B cell (primary cell): ENCODE measurements at regions of chr1 and their contacts with region 1.

Region 1: DNA sequence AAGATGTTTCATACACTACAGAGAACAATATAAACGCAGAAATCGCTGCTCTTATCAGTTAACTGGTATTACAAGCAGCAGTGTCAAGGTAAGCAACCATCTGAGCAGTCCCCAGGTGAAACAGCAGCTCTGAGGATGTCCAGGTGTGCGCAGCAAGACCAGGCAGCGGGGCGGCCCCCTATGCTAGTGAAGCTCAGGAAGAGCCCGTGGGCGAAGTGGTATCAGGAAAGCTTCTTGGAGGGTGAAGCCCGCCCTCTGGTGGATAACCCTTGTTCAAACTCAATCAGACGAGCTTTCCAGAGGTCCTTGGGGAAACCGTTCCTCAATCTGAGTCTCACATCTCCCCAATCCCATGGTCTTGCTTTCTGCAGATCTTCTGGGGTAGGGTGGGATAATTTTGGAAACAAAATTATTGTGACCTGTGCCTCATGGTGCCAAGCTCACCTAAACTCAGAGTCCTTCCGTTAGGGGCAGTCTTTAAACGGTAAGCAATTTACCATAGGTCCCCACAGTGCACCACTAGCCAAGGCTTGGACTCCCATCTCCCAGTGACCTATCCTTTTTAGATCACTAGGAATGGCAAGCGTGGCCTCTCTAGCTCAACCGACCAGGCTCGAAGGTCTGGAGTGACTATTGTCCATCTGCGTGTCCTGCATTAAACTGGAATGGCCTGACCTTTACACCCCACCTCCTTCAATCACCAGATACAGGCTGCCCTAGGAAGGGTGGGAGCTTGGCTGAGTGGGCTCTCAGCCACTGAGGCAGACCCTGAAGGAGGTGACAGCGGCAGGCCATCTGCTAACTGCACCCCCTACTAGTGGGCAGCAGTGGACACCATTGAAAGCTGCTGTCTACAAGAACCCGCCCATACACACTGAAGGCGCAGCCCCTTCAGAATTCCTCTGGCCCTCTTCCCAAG is 13.6 kb upstream of the FAM110D start:
- DNase-seq: peak; percentile 79
- ATAC-seq: peak; percentile 65
- H3K4me3 ChIP-seq: no peak overlapping the region
- H3K4me3 Mint-ChIP-seq: no peak overlapping the region
- H3K27ac ChIP-seq: no peak overlapping the region
- H3K27ac Mint-ChIP-seq: no peak overlapping the region
- H3K4me1 ChIP-seq: peaks cover 4 to 6% of the 10 kb centered on the region in 2 donors
- H3K4me1 Mint-ChIP-seq: peaks cover 3% of the 10 kb centered on the region
- H3K27me3 ChIP-seq: peaks cover 0 to 6% (median 0%) of the 10 kb centered on the region in 4 experiments
- H3K27me3 Mint-ChIP-seq: peaks cover 14% of the 10 kb centered on the region
- CTCF ChIP-seq: peak; percentile 90

Region 2: DNA sequence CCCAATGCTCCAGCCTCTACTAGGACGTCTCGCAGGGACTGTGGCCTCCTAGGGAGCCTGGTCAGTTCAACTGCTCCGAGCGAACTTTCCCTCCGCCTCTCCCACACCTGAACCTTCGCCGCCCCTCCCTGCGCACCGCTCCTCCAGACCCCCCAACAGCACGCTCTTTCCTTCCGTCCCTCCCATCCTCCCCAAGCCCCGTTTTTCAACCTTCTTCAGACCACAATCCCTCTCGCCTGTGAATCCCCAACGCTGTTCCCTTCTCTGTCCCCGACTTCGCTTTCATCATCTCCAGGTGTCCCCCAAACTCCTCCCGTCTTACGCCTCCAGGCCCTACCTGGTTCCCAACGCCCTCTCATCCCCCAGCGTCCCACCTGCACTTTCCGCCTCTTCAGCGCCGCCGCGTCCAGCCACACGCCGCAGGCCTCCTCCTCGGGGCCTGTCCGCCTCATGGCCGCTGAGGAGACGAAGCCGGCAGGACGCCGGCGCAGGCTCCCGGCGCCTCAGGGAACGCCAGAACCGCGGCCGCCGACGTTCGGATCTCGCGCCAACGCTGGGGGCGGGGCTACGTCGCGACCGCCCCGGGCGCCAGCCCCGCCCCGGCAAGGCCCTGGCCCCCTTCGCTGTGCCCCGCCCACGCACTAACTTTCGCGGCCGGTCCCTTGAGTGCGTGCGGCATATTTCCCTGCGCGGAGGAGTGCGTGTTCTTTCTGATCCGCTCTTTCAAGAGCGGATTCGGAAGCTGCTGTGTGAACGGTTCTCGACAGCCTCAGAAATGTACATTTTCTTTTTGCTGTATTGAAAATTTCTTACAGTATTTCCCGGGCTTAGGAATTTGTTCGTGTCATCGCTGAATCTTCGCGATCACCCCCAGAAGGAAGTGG is 286.2 kb before region 1 on chr1 and contains the start of gene AUNIP:
- CTCF ChIA-PET with region 1: no interaction called
- POLR2A ChIA-PET with region 1: no interaction called
- intact Hi-C with region 1: no loop called
- DNase-seq: peak; percentile 93
- ATAC-seq: peak; percentile 99
- H3K4me3 ChIP-seq: peak within 1 kb of the TSS; percentile 65 to 91 (median 77)
- H3K4me3 Mint-ChIP-seq: peak within 1 kb of the TSS; percentile 96
- H3K27ac ChIP-seq: peak within 1 kb of the TSS; percentile 76 to 86
- H3K27ac Mint-ChIP-seq: peak within 1 kb of the TSS; percentile 95
- H3K4me1 ChIP-seq: peaks cover 22 to 30% of the 10 kb centered on the region in 2 donors
- H3K4me1 Mint-ChIP-seq: peaks cover 26% of the 10 kb centered on the region
- H3K27me3 ChIP-seq: no peaks in the 10 kb centered on the region
- H3K27me3 Mint-ChIP-seq: no peaks in the 10 kb centered on the region
- CTCF ChIP-seq: no peak
- total RNA-seq, gene AUNIP: 0.27 TPM in 1 of 2 replicates, not detected in the other

Region 3: GRCh38 chr1:26126321-26127084 is 18.8 kb before region 1 on chr1:
- CTCF ChIA-PET with region 1: interaction called, 21 read pairs
- POLR2A ChIA-PET with region 1: no interaction called
- intact Hi-C with region 1: no loop called
- DNase-seq: peak; percentile 50
- ATAC-seq: peak; percentile 84
- H3K4me3 ChIP-seq: no peak overlapping the region
- H3K4me3 Mint-ChIP-seq: peak overlapping the region; percentile 44
- H3K27ac ChIP-seq: peak overlapping the region in 1 of 2 donors; percentile 34
- H3K27ac Mint-ChIP-seq: peak overlapping the region; percentile 13
- H3K4me1 ChIP-seq: peaks cover 18 to 21% of the 10 kb centered on the region in 2 donors
- H3K4me1 Mint-ChIP-seq: peaks cover 21% of the 10 kb centered on the region
- H3K27me3 ChIP-seq: peaks cover 0 to 11% (median 3%) of the 10 kb centered on the region in 4 experiments
- H3K27me3 Mint-ChIP-seq: peaks cover 7% of the 10 kb centered on the region
- CTCF ChIP-seq: no peak

Region 4: GRCh38 chr1:26161415-26162219 is 16.3 kb after region 1 on chr1:
- CTCF ChIA-PET with region 1: interaction called, 31 read pairs
- POLR2A ChIA-PET with region 1: no interaction called
- intact Hi-C with region 1: no loop called
- DNase-seq: peak; percentile 69
- ATAC-seq: peak; percentile 45
- H3K4me3 ChIP-seq: peak overlapping the region in 3 of 5 experiments; percentile 33 to 47 (median 39)
- H3K4me3 Mint-ChIP-seq: peak overlapping the region; percentile 75
- H3K27ac ChIP-seq: no peak overlapping the region
- H3K27ac Mint-ChIP-seq: no peak overlapping the region
- H3K4me1 ChIP-seq: peaks cover 25% of the 10 kb centered on the region in 2 donors
- H3K4me1 Mint-ChIP-seq: peaks cover 13% of the 10 kb centered on the region
- H3K27me3 ChIP-seq: peaks cover 0 to 64% (median 23%) of the 10 kb centered on the region in 4 experiments
- H3K27me3 Mint-ChIP-seq: peaks cover 27% of the 10 kb centered on the region
- CTCF ChIP-seq: no peak